ENCODE measurements at regions of chr9 and their contacts with region 1.

Region 1: DNA sequence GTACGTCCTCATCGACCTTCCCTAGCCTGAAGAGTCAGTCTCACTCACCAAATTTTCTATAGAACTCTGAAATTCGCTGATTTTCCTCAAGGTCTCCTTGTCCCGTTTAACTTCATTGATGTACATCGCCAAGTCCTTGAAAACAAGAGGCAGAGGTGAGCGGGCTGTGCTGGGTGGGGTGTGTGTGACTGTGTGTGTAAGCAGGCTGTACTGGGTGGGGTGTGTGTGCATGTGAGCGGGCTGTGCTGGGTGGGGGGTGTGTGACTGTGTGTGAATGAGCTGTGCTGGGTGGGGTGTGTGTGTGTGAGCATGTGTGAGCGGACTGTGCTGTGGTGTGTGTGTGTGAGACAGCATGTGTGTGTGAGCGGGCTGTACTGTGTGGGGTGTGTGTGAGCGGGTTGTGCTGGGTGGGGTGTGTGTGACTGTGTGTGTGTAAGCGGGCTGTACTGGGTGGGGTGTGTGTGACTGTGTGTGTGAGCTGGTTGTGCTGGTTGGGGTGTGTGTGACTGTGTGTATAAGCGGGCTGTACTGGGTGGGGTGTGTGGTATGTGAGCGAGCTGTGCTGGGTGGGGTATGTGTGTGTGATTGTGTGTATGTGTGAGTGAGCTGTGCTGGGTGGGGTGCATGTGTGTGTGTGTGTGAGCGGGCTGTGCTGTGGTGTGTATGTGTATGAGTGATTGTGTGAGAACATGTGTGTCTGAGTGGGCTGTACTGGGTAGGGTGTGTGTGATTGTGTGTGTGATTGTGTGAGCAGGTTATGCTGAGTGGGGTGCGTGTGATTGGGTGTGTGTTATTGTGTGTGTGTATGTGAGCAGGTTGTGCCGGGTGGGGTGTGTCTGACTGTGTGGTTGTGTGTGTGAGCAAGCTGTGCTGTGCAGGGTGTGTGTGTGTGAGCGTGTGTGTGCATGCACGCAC is 53.8 kb upstream of the SARDH start:
- DNase-seq: no peak
- H3K4me3 ChIP-seq: no peak overlapping the region
- H3K27ac ChIP-seq: no peak overlapping the region
- H3K4me1 ChIP-seq: no peaks in the 10 kb centered on the region
- H3K27me3 ChIP-seq: no peaks in the 10 kb centered on the region
- CTCF ChIP-seq: no peak
- POLR2A ChIP-seq: no peak

Region 2: DNA sequence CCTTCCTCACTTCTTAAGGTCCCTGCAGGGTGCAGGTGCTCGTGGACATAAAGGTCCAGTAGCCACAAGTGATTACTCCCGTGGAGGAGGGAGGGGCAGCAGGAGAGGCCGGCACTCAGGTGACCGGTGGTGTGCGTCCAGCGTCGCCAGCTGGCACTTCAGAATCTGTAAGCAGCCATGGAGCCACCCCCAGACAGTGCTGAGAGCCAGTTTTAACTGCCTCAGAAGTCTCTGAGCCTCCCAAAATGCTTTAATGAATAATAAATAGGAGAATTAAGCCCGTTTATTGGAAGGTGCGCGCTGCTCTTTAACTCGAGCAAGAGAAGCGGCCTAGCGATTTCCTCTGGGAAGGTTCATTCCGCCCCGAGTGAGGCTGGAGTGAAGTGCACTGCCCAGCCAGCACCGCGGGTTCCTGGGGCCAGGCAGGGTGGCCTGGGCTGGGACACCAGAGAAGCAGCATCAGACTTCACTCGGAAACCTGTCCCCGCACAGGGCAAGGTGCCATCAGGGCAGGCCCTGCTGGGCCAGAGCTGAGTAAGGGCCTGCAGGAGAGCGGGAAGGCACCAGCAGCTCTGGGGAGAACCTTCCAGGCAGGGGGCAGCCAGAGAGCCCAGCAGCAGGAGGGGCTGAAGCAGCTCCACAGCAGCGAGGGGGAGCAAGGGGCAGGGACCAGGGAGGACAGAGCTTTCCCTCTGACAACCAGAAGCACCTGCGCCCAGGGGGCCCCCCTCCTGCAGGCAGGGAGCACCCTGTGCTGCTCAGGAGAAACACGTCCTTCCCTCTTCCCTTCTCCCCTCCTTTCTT is 138.9 kb after region 1 on chr9:
- intact Hi-C with region 1: loop called (anchors 1 kb)
- DNase-seq: no peak
- H3K4me3 ChIP-seq: no peak overlapping the region
- H3K27ac ChIP-seq: no peak overlapping the region
- H3K4me1 ChIP-seq: peaks cover 0 to 4% of the 10 kb centered on the region in 2 donors
- H3K27me3 ChIP-seq: no peaks in the 10 kb centered on the region
- CTCF ChIP-seq: no peak
- POLR2A ChIP-seq: no peak

Region 3: DNA sequence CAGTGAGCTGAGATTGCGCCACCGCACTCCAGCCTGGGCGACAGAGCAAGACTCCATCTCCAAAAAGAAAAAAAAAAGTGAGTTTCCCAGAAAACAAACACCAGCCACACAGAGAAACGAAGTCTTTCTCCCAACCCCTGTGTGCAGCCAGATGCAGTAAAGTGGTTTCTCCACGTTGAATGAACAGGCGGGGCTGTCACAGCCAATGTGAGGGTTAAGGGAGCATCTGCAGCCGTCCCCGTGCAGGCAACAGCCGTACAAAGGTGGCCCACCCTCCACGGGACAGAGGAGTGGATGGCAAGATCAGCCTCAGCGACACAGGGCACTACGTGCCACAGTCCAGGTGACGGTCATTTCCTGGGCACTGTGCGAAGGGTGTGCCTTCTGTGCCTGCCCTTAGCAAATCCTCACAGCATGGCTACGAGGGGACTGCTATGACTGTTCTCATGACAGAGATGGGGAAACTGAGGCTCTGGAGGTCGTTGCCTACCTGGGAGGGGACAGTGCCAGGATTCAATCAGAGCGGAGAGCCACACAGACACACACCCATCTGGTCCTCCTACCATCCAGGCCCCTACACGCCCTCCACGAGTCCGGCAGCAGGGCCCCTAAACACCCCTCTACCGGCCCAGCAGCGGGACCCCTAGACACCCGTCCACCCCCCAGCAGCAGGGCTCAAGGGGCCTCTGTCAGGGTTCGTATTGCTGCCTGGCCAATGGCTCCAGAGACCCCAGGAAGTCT is 197.8 kb after region 1 on chr9:
- intact Hi-C with region 1: loop called (anchors 1 kb)
- DNase-seq: no peak
- H3K4me3 ChIP-seq: no peak overlapping the region
- H3K27ac ChIP-seq: peak overlapping the region in 1 of 2 donors; percentile 84
- H3K4me1 ChIP-seq: peaks cover 0 to 8% of the 10 kb centered on the region in 2 donors
- H3K27me3 ChIP-seq: no peaks in the 10 kb centered on the region
- CTCF ChIP-seq: no peak
- POLR2A ChIP-seq: no peak

Measured in breast epithelium (tissue), 4 donors.